Sigmoid colon (tissue), 7 donors: ENCODE measurements at regions of chr17 and their contacts with region 1.

Region 1: DNA sequence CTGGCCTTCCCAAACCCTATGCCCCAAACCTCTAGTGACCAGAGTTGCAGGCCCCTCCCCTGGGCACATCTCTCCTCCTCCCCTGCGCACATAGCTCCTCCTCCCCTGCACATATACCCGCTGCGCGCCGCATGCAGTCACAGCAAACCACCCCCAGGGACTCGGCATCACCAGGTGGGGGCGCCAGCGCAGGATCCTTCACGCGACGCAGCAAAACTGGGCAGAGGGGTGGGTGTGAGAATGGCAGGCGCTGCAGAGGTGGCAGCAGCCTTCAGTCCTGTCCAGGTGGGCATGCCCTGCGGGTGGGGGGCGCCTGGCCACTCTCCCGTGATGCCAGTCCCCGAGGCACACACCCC is 5.6 kb downstream of the CORO6 start:
- DNase-seq: peak; percentile 89
- H3K4me3 ChIP-seq: peak overlapping the region in 3 of 4 donors; percentile 35 to 44 (median 39)
- H3K27ac ChIP-seq: peak overlapping the region in 1 of 4 donors; percentile 65
- H3K4me1 ChIP-seq: peaks cover 0 to 93% (median 84%) of the 10 kb centered on the region in 4 donors
- H3K27me3 ChIP-seq: no peaks in the 10 kb centered on the region
- CTCF ChIP-seq: peak; percentile 43 to 58 (median 47)
- EP300 ChIP-seq: no peak
- POLR2A ChIP-seq: no peak

Region 2: DNA sequence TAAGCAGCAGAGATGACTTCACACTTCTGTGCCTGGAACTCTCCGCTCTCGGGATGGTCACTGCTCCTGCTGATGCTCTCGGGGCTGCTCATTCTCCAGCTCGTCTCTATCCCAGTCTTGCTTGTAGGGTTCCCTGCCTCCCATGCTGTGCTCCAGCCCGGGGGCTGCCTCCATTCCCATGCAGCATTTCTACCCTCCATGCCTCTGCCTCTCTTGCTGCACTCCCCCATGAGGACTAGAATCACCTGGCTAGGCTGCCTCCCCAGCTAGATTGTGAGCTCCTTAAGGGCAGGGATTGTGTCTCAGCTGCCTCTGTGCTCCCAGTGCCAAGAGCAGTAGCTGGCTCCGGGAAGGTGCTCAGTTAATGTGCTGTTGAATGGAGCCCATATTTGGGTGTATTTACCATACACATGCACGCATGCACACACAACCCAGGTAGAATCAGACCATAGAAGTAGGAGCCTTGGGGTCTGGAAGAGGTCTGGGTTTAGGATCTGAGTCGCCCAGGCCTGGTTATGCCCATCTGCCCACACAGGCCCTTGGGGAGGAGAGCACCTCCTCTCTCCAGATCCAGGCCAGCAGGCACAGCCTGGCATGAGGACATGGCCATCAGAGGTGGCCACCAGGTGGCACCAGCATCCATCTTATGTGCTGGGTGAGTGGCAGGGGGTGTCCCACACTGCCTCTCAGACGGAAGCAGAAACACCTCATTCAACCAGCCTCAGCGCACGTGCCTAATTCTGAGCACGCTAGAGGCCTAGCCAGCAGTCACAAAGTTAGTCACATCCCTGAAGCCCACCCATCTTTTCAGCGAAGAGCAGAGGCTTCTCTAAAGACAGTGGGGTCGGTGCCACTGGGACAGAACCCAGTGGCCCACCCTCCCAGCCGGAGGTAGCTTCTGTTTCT is 37.0 kb before region 1 on chr17:
- intact Hi-C with region 1: loop called (anchors 5 kb)
- DNase-seq: peak; percentile 91
- H3K4me3 ChIP-seq: no peak overlapping the region
- H3K27ac ChIP-seq: no peak overlapping the region
- H3K4me1 ChIP-seq: peaks cover 0 to 34% (median 27%) of the 10 kb centered on the region in 4 donors
- H3K27me3 ChIP-seq: no peaks in the 10 kb centered on the region
- CTCF ChIP-seq: peak; percentile 79 to 88 (median 88)
- EP300 ChIP-seq: no peak
- POLR2A ChIP-seq: no peak

Region 3: GRCh38 chr17:29589524-29590410 is 27.3 kb before region 1 on chr17 and contains the start of gene GIT1:
- intact Hi-C with region 1: loop called (anchors 1 kb)
- DNase-seq: peak; percentile 92
- H3K4me3 ChIP-seq: peak within 1 kb of the TSS; percentile 66 to 90 (median 83)
- H3K27ac ChIP-seq: peak within 1 kb of the TSS; percentile 88 to 92 (median 90)
- H3K4me1 ChIP-seq: peaks cover 0 to 85% (median 76%) of the 10 kb centered on the region in 4 donors
- H3K27me3 ChIP-seq: no peaks in the 10 kb centered on the region
- CTCF ChIP-seq: no peak
- EP300 ChIP-seq: no peak
- POLR2A ChIP-seq: no peak
- total RNA-seq, gene GIT1: 13.6 to 31.3 (median 16.8) TPM

Region 4: GRCh38 chr17:29760761-29761696 is 143.9 kb after region 1 on chr17:
- intact Hi-C with region 1: loop called (anchors 10 kb)
- DNase-seq: peak; percentile 94
- H3K4me3 ChIP-seq: peak overlapping the region; percentile 61 to 80 (median 73)
- H3K27ac ChIP-seq: peak overlapping the region; percentile 81 to 88 (median 84)
- H3K4me1 ChIP-seq: peaks cover 0 to 9% (median 2%) of the 10 kb centered on the region in 4 donors
- H3K27me3 ChIP-seq: no peaks in the 10 kb centered on the region
- CTCF ChIP-seq: no peak
- EP300 ChIP-seq: no peak
- POLR2A ChIP-seq: peak in 1 of 2 donors; percentile 32